ENCODE measurements at regions of chr2 and their contacts with region 1.

Region 1: DNA sequence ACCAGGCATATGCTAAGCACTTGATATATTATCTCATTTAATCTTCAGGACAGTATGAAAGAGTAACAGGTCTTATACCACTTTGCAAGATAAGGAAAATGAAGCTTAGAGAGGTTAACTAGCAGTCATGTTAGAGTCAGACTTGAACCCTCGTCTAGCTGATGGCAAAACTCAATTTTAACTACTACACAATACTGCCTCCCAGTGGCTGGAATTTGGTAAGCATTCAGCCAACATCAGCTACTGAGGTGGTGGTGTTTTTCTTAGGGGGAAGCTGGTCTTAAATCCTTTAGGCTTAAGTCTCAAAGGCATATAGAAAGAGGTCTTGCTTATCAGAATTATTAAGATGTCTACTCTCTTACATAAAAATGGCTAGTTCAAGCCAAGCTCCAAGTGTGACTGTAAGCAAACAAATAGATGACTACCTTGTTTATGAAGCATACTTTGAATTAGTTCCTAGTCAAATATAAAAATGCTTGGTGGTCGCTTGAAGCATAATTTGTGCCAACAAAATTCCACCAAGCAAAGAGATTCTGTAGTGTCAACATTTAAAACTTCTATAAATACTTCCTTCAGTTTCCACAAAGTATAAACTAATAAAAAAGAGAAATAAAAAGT is 325.4 kb upstream of the FIGN start:
- DNase-seq: peak; percentile 28
- H3K4me3 ChIP-seq: no peak overlapping the region
- H3K27ac ChIP-seq: no peak overlapping the region
- H3K4me1 ChIP-seq: no peaks in the 10 kb centered on the region
- H3K27me3 ChIP-seq: peaks cover 3% of the 10 kb centered on the region
- CTCF ChIP-seq: peak; percentile 81 to 88

Region 2: GRCh38 chr2:163171786-163172531 is 889.3 kb before region 1 on chr2:
- CTCF ChIA-PET with region 1: no interaction called
- dilution Hi-C with region 1: no loop called
- in situ Hi-C with region 1: no loop called
- intact Hi-C with region 1: loop called (anchors 5 kb)
- DNase-seq: peak; percentile 48
- H3K4me3 ChIP-seq: no peak overlapping the region
- H3K27ac ChIP-seq: no peak overlapping the region
- H3K4me1 ChIP-seq: no peaks in the 10 kb centered on the region
- H3K27me3 ChIP-seq: no peaks in the 10 kb centered on the region
- CTCF ChIP-seq: no peak

Region 3: DNA sequence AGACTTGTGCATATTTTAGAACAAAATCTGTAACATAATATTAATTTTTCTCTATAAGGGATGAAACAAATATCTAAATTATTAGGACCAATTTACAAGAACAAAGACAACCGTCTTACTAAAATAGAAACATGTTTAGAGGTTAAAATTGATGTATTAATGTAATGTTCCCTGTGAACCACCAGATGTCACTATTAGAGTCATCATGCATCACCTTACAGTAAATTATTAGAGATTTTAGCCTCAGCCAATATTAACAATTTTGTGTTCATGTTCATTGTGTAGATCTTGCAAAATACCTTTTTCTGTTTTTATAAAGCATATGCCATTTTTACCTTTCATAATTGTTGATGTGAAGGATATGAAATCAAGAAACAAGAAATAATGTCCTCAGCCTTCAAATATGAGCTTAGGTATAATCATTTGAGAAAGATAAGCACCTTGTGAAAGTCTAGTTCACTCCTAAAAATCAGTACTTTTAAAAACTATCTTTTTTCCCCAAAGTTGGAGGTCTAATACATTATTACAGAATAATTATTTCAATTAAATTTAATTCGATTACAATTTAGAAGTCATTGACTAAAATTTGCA is 878.4 kb before region 1 on chr2:
- CTCF ChIA-PET with region 1: no interaction called
- dilution Hi-C with region 1: no loop called
- in situ Hi-C with region 1: no loop called
- intact Hi-C with region 1: loop called (anchors 2 kb)
- DNase-seq: no peak
- H3K4me3 ChIP-seq: no peak overlapping the region
- H3K27ac ChIP-seq: no peak overlapping the region
- H3K4me1 ChIP-seq: no peaks in the 10 kb centered on the region
- H3K27me3 ChIP-seq: peaks cover 2% of the 10 kb centered on the region
- CTCF ChIP-seq: peak; percentile 60 to 61

Region 4: DNA sequence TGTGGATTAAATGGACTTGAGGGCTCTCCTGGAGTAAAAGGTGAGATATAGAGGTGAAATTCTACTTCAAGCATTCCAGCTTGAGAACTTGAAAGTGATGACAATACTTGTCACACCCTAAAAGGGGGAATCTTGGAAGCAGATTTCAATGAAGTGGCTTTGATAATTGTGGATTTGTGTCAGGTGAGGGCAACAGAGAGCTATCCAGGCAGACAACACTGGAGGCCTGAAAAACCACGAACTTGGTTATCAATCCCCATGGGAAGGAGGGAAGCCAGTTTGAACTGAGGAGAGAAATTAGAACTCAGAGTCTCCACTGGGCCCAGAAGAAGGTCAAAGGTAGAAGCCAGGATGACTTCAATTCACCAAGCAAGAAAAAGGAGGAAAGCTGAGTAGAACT is 589.3 kb before region 1 on chr2:
- CTCF ChIA-PET with region 1: no interaction called
- dilution Hi-C with region 1: no loop called
- in situ Hi-C with region 1: loop called in 1 of 2 experiments (anchors 25 kb)
- intact Hi-C with region 1: loop called (anchors 1 kb)
- DNase-seq: peak; percentile 19
- H3K4me3 ChIP-seq: no peak overlapping the region
- H3K27ac ChIP-seq: no peak overlapping the region
- H3K4me1 ChIP-seq: no peaks in the 10 kb centered on the region
- H3K27me3 ChIP-seq: no peaks in the 10 kb centered on the region
- CTCF ChIP-seq: peak; percentile 20 to 65

Region 5: GRCh38 chr2:163692611-163693482 is 368.4 kb before region 1 on chr2:
- CTCF ChIA-PET with region 1: no interaction called
- dilution Hi-C with region 1: no loop called
- in situ Hi-C with region 1: no loop called
- intact Hi-C with region 1: loop called (anchors 5 kb)
- DNase-seq: no peak
- H3K4me3 ChIP-seq: no peak overlapping the region
- H3K27ac ChIP-seq: no peak overlapping the region
- H3K4me1 ChIP-seq: no peaks in the 10 kb centered on the region
- H3K27me3 ChIP-seq: no peaks in the 10 kb centered on the region
- CTCF ChIP-seq: no peak

Region 6: DNA sequence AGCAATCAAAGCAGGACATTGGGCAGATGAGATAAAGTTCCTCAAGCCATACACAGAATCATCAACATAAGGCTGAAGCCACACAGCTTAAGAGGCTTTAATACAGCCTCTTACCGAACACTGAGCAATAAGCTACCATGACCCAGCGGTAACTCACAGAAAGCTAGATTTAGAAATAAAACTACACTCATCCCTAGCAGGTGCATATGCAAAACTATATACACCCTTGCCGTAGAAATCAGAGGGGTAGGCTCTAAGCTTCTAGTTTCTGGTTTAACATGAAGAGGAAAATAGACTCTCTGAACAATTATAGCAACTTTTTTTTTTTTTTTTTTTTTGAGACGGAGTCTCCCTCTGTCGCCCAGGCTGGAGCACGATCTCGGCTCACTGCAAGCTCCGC is 103.4 kb after region 1 on chr2:
- CTCF ChIA-PET with region 1: no interaction called
- dilution Hi-C with region 1: no loop called
- in situ Hi-C with region 1: no loop called
- intact Hi-C with region 1: no loop called
- DNase-seq: no peak
- H3K4me3 ChIP-seq: no peak overlapping the region
- H3K27ac ChIP-seq: no peak overlapping the region
- H3K4me1 ChIP-seq: no peaks in the 10 kb centered on the region
- H3K27me3 ChIP-seq: peaks cover 2% of the 10 kb centered on the region
- CTCF ChIP-seq: no peak

Region 7: DNA sequence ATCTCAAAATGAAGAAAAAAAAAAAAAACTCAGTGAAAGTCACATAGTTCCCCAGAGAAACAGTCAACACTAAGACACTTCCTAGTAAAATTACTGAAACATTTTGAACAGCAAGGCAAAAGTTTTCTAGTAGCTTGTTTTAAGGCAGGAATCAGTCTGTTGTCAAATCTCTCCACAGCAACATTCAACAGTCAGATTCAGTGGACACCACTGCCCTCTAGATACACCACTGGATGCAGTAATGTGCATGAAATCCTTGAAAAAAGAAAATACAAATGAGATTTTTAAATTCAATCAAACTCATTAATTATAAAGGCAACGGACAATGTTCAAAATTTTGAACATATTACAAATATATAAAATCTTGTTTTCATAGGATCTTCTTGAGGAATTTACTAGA is 513.7 kb after region 1 on chr2:
- CTCF ChIA-PET with region 1: no interaction called
- dilution Hi-C with region 1: no loop called
- in situ Hi-C with region 1: no loop called
- intact Hi-C with region 1: no loop called
- DNase-seq: no peak
- H3K4me3 ChIP-seq: no peak overlapping the region
- H3K27ac ChIP-seq: no peak overlapping the region
- H3K4me1 ChIP-seq: no peaks in the 10 kb centered on the region
- H3K27me3 ChIP-seq: no peaks in the 10 kb centered on the region
- CTCF ChIP-seq: no peak

Region 8: DNA sequence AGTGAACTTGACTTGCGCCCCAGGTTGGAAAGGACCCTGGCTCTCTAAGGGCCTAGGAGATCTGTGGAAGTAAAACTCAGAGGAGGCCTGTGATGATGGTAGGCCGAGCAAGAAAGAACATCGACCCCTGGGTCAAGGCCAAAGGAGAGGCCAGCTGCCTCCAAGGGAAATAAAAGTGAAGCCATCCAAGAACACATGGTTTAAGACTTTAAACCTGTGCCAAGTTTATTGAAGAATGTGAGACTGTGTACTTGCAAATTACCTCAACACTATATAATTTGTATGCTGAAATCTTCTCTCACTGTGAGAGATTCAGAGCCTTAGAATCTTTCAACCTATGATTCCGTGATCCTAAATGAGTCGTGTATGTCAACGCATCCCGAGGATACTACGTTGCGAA is 821.0 kb after region 1 on chr2:
- CTCF ChIA-PET with region 1: no interaction called
- dilution Hi-C with region 1: no loop called
- in situ Hi-C with region 1: no loop called
- intact Hi-C with region 1: no loop called
- DNase-seq: no peak
- H3K4me3 ChIP-seq: no peak overlapping the region
- H3K27ac ChIP-seq: no peak overlapping the region
- H3K4me1 ChIP-seq: peaks cover 13% of the 10 kb centered on the region
- H3K27me3 ChIP-seq: no peaks in the 10 kb centered on the region
- CTCF ChIP-seq: no peak